ENCODE measurements at regions of chr11 and their contacts with region 1.

Region 1: GRCh38 chr11:106031202-106031810 is 9.3 kb upstream of the MSANTD4 start:
- DNase-seq: no peak
- H3K4me3 Mint-ChIP-seq: no peak overlapping the region
- H3K27ac Mint-ChIP-seq: no peak overlapping the region
- H3K4me1 Mint-ChIP-seq: peaks cover 3% of the 10 kb centered on the region
- H3K27me3 Mint-ChIP-seq: peaks cover 18% of the 10 kb centered on the region

Region 2: DNA sequence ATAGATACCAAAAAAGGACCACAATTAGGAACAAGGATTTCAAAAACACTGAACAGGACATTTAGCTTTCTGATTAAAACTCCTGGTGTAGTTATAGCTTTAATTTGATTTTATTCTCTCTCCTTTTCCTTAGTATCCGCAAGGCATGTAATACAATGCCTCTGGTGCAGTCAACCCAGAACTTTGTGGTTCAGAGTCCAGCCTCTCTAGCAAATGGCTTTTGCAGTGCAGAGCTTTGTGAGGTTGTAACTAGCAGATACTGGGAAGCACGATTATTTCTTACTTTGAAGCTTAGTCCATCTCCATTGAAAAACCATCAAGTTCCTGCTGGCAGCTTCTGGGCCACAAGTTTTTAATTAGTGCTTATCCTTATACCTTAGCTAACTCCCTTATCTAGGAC is 341.7 kb before region 1 on chr11:
- intact Hi-C with region 1: no loop called
- DNase-seq: no peak
- H3K4me3 Mint-ChIP-seq: no peak overlapping the region
- H3K27ac Mint-ChIP-seq: no peak overlapping the region
- H3K4me1 Mint-ChIP-seq: no peaks in the 10 kb centered on the region
- H3K27me3 Mint-ChIP-seq: no peaks in the 10 kb centered on the region

Region 3: GRCh38 chr11:106063009-106063408 is 31.7 kb after region 1 on chr11:
- intact Hi-C with region 1: loop called (anchors 1 kb)
- DNase-seq: no peak
- H3K4me3 Mint-ChIP-seq: no peak overlapping the region
- H3K27ac Mint-ChIP-seq: no peak overlapping the region
- H3K4me1 Mint-ChIP-seq: peaks cover 8% of the 10 kb centered on the region
- H3K27me3 Mint-ChIP-seq: no peaks in the 10 kb centered on the region

Region 4: GRCh38 chr11:106446955-106447354 is 415.6 kb after region 1 on chr11:
- intact Hi-C with region 1: no loop called
- DNase-seq: no peak
- H3K4me3 Mint-ChIP-seq: no peak overlapping the region
- H3K27ac Mint-ChIP-seq: no peak overlapping the region
- H3K4me1 Mint-ChIP-seq: no peaks in the 10 kb centered on the region
- H3K27me3 Mint-ChIP-seq: no peaks in the 10 kb centered on the region